ENCODE measurements at regions of chr2 and their contacts with region 1.

Region 1: GRCh38 chr2:190887089-190887488 is 6.5 kb downstream of the GLS start:
- DNase-seq: no peak
- ATAC-seq: no peak
- H3K4me3 ChIP-seq: peak overlapping the region in 1 of 2 donors; percentile 48
- H3K27ac ChIP-seq: no peak overlapping the region
- H3K4me1 ChIP-seq: peaks cover 0 to 3% of the 10 kb centered on the region in 2 donors
- H3K27me3 ChIP-seq: no peaks in the 10 kb centered on the region

Region 2: DNA sequence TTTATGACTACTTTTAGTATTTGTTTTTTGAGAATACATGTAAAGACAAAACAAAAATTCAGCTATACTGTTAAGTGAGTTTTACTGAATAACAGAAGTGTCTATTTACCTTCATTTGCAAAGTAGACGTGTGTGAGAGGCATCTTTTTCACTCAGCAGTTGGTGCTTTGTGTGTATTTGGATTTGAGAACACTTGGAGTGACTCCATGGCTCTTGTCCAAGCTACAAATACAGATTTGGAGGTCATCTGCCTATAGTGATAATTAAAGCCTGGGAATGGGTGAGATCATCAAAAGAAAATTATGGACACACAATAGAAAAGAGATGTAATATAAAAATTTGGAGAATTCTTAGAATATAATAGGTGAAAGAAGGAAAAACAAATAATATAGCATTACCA is 232.0 kb before region 1 on chr2:
- intact Hi-C with region 1: no loop called
- DNase-seq: no peak
- ATAC-seq: no peak
- H3K4me3 ChIP-seq: no peak overlapping the region
- H3K27ac ChIP-seq: no peak overlapping the region
- H3K4me1 ChIP-seq: peaks cover 8 to 17% of the 10 kb centered on the region in 2 donors
- H3K27me3 ChIP-seq: no peaks in the 10 kb centered on the region

Region 3: GRCh38 chr2:190679813-190680591 is 207.1 kb before region 1 on chr2:
- intact Hi-C with region 1: no loop called
- DNase-seq: peak in 1 of 2 donors; percentile 77
- ATAC-seq: peak; percentile 66
- H3K4me3 ChIP-seq: no peak overlapping the region
- H3K27ac ChIP-seq: no peak overlapping the region
- H3K4me1 ChIP-seq: peaks cover 0 to 9% of the 10 kb centered on the region in 2 donors
- H3K27me3 ChIP-seq: no peaks in the 10 kb centered on the region

Region 4: GRCh38 chr2:190781604-190782198 is 105.4 kb before region 1 on chr2:
- intact Hi-C with region 1: loop called in 1 of 2 experiments (anchors 10 kb)
- DNase-seq: no peak
- ATAC-seq: no peak
- H3K4me3 ChIP-seq: no peak overlapping the region
- H3K27ac ChIP-seq: no peak overlapping the region
- H3K4me1 ChIP-seq: peaks cover 0 to 5% of the 10 kb centered on the region in 2 donors
- H3K27me3 ChIP-seq: no peaks in the 10 kb centered on the region

Region 5: GRCh38 chr2:190853531-190854383 is 33.3 kb before region 1 on chr2:
- intact Hi-C with region 1: loop called in 1 of 2 experiments (anchors 5 kb)
- DNase-seq: no peak
- ATAC-seq: no peak
- H3K4me3 ChIP-seq: no peak overlapping the region
- H3K27ac ChIP-seq: no peak overlapping the region
- H3K4me1 ChIP-seq: peaks cover 0 to 10% of the 10 kb centered on the region in 2 donors
- H3K27me3 ChIP-seq: no peaks in the 10 kb centered on the region

Region 6: GRCh38 chr2:190929919-190930318 is 42.8 kb after region 1 on chr2:
- intact Hi-C with region 1: loop called in 1 of 2 experiments (anchors 5 kb)
- DNase-seq: no peak
- ATAC-seq: no peak
- H3K4me3 ChIP-seq: no peak overlapping the region
- H3K27ac ChIP-seq: no peak overlapping the region
- H3K4me1 ChIP-seq: no peaks in the 10 kb centered on the region
- H3K27me3 ChIP-seq: no peaks in the 10 kb centered on the region